B cell (primary cell): ENCODE measurements at regions of chr1 and their contacts with region 1.

Region 1: GRCh38 chr1:185670187-185670627 is 64.0 kb upstream of the HMCN1 start:
- DNase-seq: peak; percentile 73
- ATAC-seq: peak; percentile 65
- H3K4me3 ChIP-seq: no peak overlapping the region
- H3K4me3 Mint-ChIP-seq: no peak overlapping the region
- H3K27ac ChIP-seq: no peak overlapping the region
- H3K27ac Mint-ChIP-seq: no peak overlapping the region
- H3K4me1 ChIP-seq: peaks cover 24 to 26% of the 10 kb centered on the region in 2 donors
- H3K4me1 Mint-ChIP-seq: peaks cover 30% of the 10 kb centered on the region
- H3K27me3 ChIP-seq: no peaks in the 10 kb centered on the region
- H3K27me3 Mint-ChIP-seq: no peaks in the 10 kb centered on the region
- CTCF ChIP-seq: peak; percentile 73

Region 2: GRCh38 chr1:184867866-184868689 is 802.1 kb before region 1 on chr1:
- CTCF ChIA-PET with region 1: no interaction called
- POLR2A ChIA-PET with region 1: no interaction called
- intact Hi-C with region 1: no loop called
- DNase-seq: no peak
- ATAC-seq: no peak
- H3K4me3 ChIP-seq: no peak overlapping the region
- H3K4me3 Mint-ChIP-seq: no peak overlapping the region
- H3K27ac ChIP-seq: peak overlapping the region; percentile 42 to 44
- H3K27ac Mint-ChIP-seq: peak overlapping the region; percentile 43
- H3K4me1 ChIP-seq: peaks cover 16 to 19% of the 10 kb centered on the region in 2 donors
- H3K4me1 Mint-ChIP-seq: peaks cover 28% of the 10 kb centered on the region
- H3K27me3 ChIP-seq: no peaks in the 10 kb centered on the region
- H3K27me3 Mint-ChIP-seq: no peaks in the 10 kb centered on the region
- CTCF ChIP-seq: no peak

Region 3: DNA sequence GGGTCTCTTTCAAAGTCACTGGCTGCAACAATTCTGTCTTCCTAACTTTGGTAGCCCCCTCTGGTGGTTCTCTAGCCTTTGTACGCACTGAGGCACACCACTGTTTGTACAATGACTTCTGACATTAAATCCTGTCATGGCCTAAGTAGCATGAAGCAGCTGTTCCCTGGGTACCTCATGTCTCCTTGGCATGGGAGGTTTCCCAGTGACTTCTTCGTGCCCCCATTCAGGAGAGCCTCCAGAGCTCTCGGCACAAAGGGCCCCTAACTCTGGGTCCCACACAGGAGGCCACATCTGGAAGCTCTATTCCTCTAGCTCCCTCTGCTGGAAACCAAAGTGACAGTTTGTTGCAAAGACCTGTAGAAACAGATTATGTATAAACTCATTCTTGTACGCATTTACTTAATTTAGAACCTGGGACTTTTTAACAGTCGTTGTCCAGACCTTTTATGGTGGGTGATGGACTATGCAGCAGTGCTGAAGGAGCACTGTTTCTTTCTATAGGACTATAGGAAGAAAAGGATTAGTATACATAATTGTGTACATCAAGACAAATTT is 499.8 kb before region 1 on chr1:
- CTCF ChIA-PET with region 1: interaction called, 39 read pairs
- POLR2A ChIA-PET with region 1: no interaction called
- intact Hi-C with region 1: no loop called
- DNase-seq: peak; percentile 79
- ATAC-seq: peak; percentile 81
- H3K4me3 ChIP-seq: no peak overlapping the region
- H3K4me3 Mint-ChIP-seq: no peak overlapping the region
- H3K27ac ChIP-seq: peak overlapping the region in 1 of 2 donors; percentile 3
- H3K27ac Mint-ChIP-seq: no peak overlapping the region
- H3K4me1 ChIP-seq: peaks cover 0 to 6% of the 10 kb centered on the region in 2 donors
- H3K4me1 Mint-ChIP-seq: peaks cover 4% of the 10 kb centered on the region
- H3K27me3 ChIP-seq: no peaks in the 10 kb centered on the region
- H3K27me3 Mint-ChIP-seq: no peaks in the 10 kb centered on the region
- CTCF ChIP-seq: peak; percentile 84

Region 4: GRCh38 chr1:185238447-185238846 is 431.8 kb before region 1 on chr1:
- CTCF ChIA-PET with region 1: interaction called, 22 read pairs
- POLR2A ChIA-PET with region 1: no interaction called
- intact Hi-C with region 1: loop called (anchors 5 kb)
- DNase-seq: peak; percentile 10
- ATAC-seq: no peak
- H3K4me3 ChIP-seq: no peak overlapping the region
- H3K4me3 Mint-ChIP-seq: no peak overlapping the region
- H3K27ac ChIP-seq: no peak overlapping the region
- H3K27ac Mint-ChIP-seq: no peak overlapping the region
- H3K4me1 ChIP-seq: no peaks in the 10 kb centered on the region
- H3K4me1 Mint-ChIP-seq: no peaks in the 10 kb centered on the region
- H3K27me3 ChIP-seq: no peaks in the 10 kb centered on the region
- H3K27me3 Mint-ChIP-seq: no peaks in the 10 kb centered on the region
- CTCF ChIP-seq: peak; percentile 31

Region 5: DNA sequence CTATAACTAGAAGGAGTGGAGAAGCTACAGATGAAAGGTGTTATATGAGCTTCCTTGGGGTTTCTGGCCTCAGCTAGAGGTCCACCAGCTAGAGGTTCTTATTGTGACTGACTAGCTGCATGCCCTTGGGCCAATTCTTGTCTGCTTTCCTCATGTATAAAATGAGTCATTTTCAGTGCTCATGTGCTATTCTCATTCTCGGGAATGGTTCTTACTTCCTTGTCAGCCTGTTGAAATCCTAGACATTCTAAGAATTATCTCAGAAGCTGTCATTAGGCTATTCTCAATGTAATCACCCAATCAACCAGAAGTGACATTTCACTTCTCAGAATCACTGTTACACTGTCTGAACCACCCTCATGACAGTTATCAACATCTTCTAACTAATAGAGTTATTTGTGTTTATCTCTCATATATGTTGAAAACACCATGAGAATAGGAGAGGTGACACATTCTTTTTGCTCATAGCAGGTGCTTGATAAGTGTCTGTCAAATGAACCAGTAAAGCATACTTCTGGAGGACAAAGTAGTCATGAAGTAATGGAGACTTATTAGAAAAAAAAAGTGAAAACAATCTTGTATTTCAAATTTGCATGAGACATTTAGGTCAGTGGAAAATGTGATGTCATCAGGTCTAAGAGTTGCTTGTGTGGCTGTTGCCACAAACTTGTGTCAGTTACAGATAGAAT is 230.3 kb before region 1 on chr1:
- CTCF ChIA-PET with region 1: no interaction called
- POLR2A ChIA-PET with region 1: no interaction called
- intact Hi-C with region 1: no loop called
- DNase-seq: peak; percentile 51
- ATAC-seq: peak; percentile 83
- H3K4me3 ChIP-seq: no peak overlapping the region
- H3K4me3 Mint-ChIP-seq: no peak overlapping the region
- H3K27ac ChIP-seq: peak overlapping the region in 1 of 2 donors; percentile 54
- H3K27ac Mint-ChIP-seq: no peak overlapping the region
- H3K4me1 ChIP-seq: peaks cover 14 to 17% of the 10 kb centered on the region in 2 donors
- H3K4me1 Mint-ChIP-seq: peaks cover 3% of the 10 kb centered on the region
- H3K27me3 ChIP-seq: no peaks in the 10 kb centered on the region
- H3K27me3 Mint-ChIP-seq: no peaks in the 10 kb centered on the region
- CTCF ChIP-seq: no peak

Region 6: GRCh38 chr1:185559684-185560331 is 110.4 kb before region 1 on chr1:
- CTCF ChIA-PET with region 1: interaction called, 10 read pairs
- POLR2A ChIA-PET with region 1: no interaction called
- intact Hi-C with region 1: no loop called
- DNase-seq: peak; percentile 60
- ATAC-seq: peak; percentile 79
- H3K4me3 ChIP-seq: no peak overlapping the region
- H3K4me3 Mint-ChIP-seq: peak overlapping the region; percentile 5
- H3K27ac ChIP-seq: peak overlapping the region in 1 of 2 donors; percentile 25
- H3K27ac Mint-ChIP-seq: peak overlapping the region; percentile 28
- H3K4me1 ChIP-seq: peaks cover 16 to 17% of the 10 kb centered on the region in 2 donors
- H3K4me1 Mint-ChIP-seq: peaks cover 26% of the 10 kb centered on the region
- H3K27me3 ChIP-seq: no peaks in the 10 kb centered on the region
- H3K27me3 Mint-ChIP-seq: no peaks in the 10 kb centered on the region
- CTCF ChIP-seq: no peak

Region 7: DNA sequence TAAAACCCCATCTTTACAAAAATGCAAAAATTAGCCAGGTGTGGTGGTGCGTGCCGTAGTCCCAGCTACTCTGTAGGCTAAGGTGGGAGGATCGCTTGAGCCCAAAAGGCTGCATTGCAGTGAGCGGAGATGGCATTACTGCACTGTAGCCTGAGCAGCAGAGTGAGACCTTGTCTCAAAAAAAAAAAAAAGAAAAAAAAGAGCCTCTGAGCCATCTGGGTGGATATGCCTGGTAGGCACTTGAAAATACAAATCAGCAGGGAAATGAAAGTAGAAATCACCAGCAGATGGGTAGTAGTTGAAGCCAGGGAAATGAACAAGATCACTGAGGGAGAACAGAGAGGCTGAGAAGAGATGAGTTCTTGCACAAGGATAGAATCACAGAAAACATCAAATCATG is 67.0 kb before region 1 on chr1:
- CTCF ChIA-PET with region 1: interaction called, 21 read pairs
- POLR2A ChIA-PET with region 1: no interaction called
- intact Hi-C with region 1: loop called (anchors 5 kb)
- DNase-seq: peak; percentile 86
- ATAC-seq: peak; percentile 93
- H3K4me3 ChIP-seq: peak overlapping the region in 1 of 5 experiments; percentile 42
- H3K4me3 Mint-ChIP-seq: no peak overlapping the region
- H3K27ac ChIP-seq: peak overlapping the region; percentile 27 to 56
- H3K27ac Mint-ChIP-seq: no peak overlapping the region
- H3K4me1 ChIP-seq: peaks cover 54 to 68% of the 10 kb centered on the region in 2 donors
- H3K4me1 Mint-ChIP-seq: peaks cover 31% of the 10 kb centered on the region
- H3K27me3 ChIP-seq: no peaks in the 10 kb centered on the region
- H3K27me3 Mint-ChIP-seq: no peaks in the 10 kb centered on the region
- CTCF ChIP-seq: no peak

Region 8: DNA sequence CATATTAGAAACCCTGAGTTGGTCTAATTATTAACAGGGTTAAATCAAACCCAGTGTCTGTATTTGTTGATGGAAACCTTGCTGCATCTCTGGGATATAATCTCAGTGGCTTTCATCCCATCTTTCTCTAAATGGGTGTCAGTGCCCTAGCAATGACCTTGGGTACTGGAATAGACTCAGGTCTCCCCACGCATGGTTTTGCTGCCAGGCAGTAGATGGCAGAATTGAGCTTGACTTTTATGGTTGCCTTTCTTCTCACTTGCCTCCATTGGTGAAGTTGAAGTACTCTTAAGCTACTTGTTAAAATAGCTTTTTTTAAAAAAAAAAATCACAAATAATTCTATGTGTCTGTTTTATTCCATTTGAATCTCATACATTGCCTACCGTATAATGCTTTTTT is 17.9 kb before region 1 on chr1:
- CTCF ChIA-PET with region 1: interaction called, 13 read pairs
- POLR2A ChIA-PET with region 1: no interaction called
- intact Hi-C with region 1: no loop called
- DNase-seq: no peak
- ATAC-seq: no peak
- H3K4me3 ChIP-seq: no peak overlapping the region
- H3K4me3 Mint-ChIP-seq: no peak overlapping the region
- H3K27ac ChIP-seq: no peak overlapping the region
- H3K27ac Mint-ChIP-seq: no peak overlapping the region
- H3K4me1 ChIP-seq: no peaks in the 10 kb centered on the region
- H3K4me1 Mint-ChIP-seq: no peaks in the 10 kb centered on the region
- H3K27me3 ChIP-seq: no peaks in the 10 kb centered on the region
- H3K27me3 Mint-ChIP-seq: no peaks in the 10 kb centered on the region
- CTCF ChIP-seq: no peak

Region 9: GRCh38 chr1:186974774-186975181 is 1304.6 kb after region 1 on chr1:
- CTCF ChIA-PET with region 1: no interaction called
- POLR2A ChIA-PET with region 1: no interaction called
- intact Hi-C with region 1: no loop called
- DNase-seq: no peak
- ATAC-seq: no peak
- H3K4me3 ChIP-seq: no peak overlapping the region
- H3K4me3 Mint-ChIP-seq: no peak overlapping the region
- H3K27ac ChIP-seq: no peak overlapping the region
- H3K27ac Mint-ChIP-seq: no peak overlapping the region
- H3K4me1 ChIP-seq: no peaks in the 10 kb centered on the region
- H3K4me1 Mint-ChIP-seq: no peaks in the 10 kb centered on the region
- H3K27me3 ChIP-seq: no peaks in the 10 kb centered on the region
- H3K27me3 Mint-ChIP-seq: no peaks in the 10 kb centered on the region
- CTCF ChIP-seq: no peak